ENCODE measurements at regions of chr18 and their contacts with region 1.

Region 1: DNA sequence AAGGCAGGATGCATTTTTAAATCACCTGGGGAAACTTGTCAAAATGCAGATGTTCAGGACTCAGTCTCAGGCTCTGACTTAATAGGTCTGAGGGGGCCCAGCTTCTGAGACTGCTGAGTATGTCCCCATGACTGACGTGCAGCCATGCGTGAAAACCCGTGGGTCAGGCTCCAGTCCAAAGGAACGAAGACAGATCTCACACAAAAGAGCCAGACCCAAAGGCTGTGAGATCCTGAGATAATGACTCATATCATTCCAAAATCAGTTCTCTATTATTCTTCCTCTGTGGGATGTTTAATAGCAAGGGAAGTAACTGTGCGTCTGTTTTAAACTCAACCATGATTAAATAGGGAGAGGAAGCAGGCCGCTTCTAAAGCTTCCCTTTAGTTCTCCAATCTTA is 107.4 kb upstream of the ACAA2 start:
- DNase-seq: no peak
- ATAC-seq: no peak
- H3K4me3 Mint-ChIP-seq: no peak overlapping the region
- H3K27ac Mint-ChIP-seq: no peak overlapping the region
- H3K4me1 Mint-ChIP-seq: peaks cover 3% of the 10 kb centered on the region
- H3K27me3 Mint-ChIP-seq: peaks cover 19% of the 10 kb centered on the region
- CTCF ChIP-seq: no peak

Region 2: GRCh38 chr18:48913201-48913600 is 1007.5 kb before region 1 on chr18:
- CTCF ChIA-PET with region 1: no interaction called
- POLR2A ChIA-PET with region 1: no interaction called
- intact Hi-C with region 1: loop called (anchors 10 kb)
- DNase-seq: no peak
- ATAC-seq: peak; percentile 79
- H3K4me3 Mint-ChIP-seq: no peak overlapping the region
- H3K27ac Mint-ChIP-seq: no peak overlapping the region
- H3K4me1 Mint-ChIP-seq: peaks cover 10% of the 10 kb centered on the region
- H3K27me3 Mint-ChIP-seq: no peaks in the 10 kb centered on the region
- CTCF ChIP-seq: no peak

Region 3: GRCh38 chr18:51235011-51235789 is 1314.5 kb after region 1 on chr18:
- CTCF ChIA-PET with region 1: no interaction called
- POLR2A ChIA-PET with region 1: no interaction called
- intact Hi-C with region 1: no loop called
- DNase-seq: no peak
- ATAC-seq: peak; percentile 71
- H3K4me3 Mint-ChIP-seq: no peak overlapping the region
- H3K27ac Mint-ChIP-seq: no peak overlapping the region
- H3K4me1 Mint-ChIP-seq: peaks cover 3% of the 10 kb centered on the region
- H3K27me3 Mint-ChIP-seq: peaks cover 3% of the 10 kb centered on the region
- CTCF ChIP-seq: no peak

Measured in activated B cell treated with CpG ODN at 0.5 μM for 24 hours (primary cell).